Naive thymus-derived CD4-positive, alpha-beta T cell (primary cell): ENCODE measurements at regions of chr7 and their contacts with region 1.

Region 1: GRCh38 chr7:3461923-3462322 is 160.9 kb downstream of the SDK1 start:
- DNase-seq: peak; percentile 11 to 91 (median 86)
- ATAC-seq: peak; percentile 96
- H3K4me3 ChIP-seq: peak overlapping the region; percentile 19
- H3K4me3 Mint-ChIP-seq: peak overlapping the region; percentile 21 to 92 (median 81)
- H3K27ac ChIP-seq: peak overlapping the region; percentile 70
- H3K27ac Mint-ChIP-seq: peak overlapping the region; percentile 76 to 96 (median 93)
- H3K4me1 ChIP-seq: peaks cover 15 to 45% of the 10 kb centered on the region in 2 donors
- H3K4me1 Mint-ChIP-seq: peaks cover 20 to 90% (median 77%) of the 10 kb centered on the region in 7 donors
- H3K27me3 ChIP-seq: no peaks in the 10 kb centered on the region
- H3K27me3 Mint-ChIP-seq: no peaks in the 10 kb centered on the region

Region 2: GRCh38 chr7:3399858-3400257 is 62.1 kb before region 1 on chr7:
- CTCF ChIA-PET with region 1: no interaction called
- POLR2A ChIA-PET with region 1: no interaction called
- intact Hi-C with region 1: loop called in 1 of 2 experiments (anchors 5 kb)
- DNase-seq: no peak
- ATAC-seq: peak; percentile 49
- H3K4me3 ChIP-seq: no peak overlapping the region
- H3K4me3 Mint-ChIP-seq: no peak overlapping the region
- H3K27ac ChIP-seq: no peak overlapping the region
- H3K27ac Mint-ChIP-seq: no peak overlapping the region
- H3K4me1 ChIP-seq: no peaks in the 10 kb centered on the region
- H3K4me1 Mint-ChIP-seq: peaks cover 0 to 3% (median 0%) of the 10 kb centered on the region in 7 donors
- H3K27me3 ChIP-seq: peaks cover 0 to 3% of the 10 kb centered on the region in 2 donors
- H3K27me3 Mint-ChIP-seq: peaks cover 0 to 15% (median 0%) of the 10 kb centered on the region in 5 donors

Region 3: GRCh38 chr7:3476598-3476997 is 14.7 kb after region 1 on chr7:
- CTCF ChIA-PET with region 1: no interaction called
- POLR2A ChIA-PET with region 1: no interaction called
- intact Hi-C with region 1: loop called in 1 of 2 experiments (anchors 1 kb)
- DNase-seq: no peak
- ATAC-seq: no peak
- H3K4me3 ChIP-seq: no peak overlapping the region
- H3K4me3 Mint-ChIP-seq: peak overlapping the region in 1 of 10 donors; percentile 46
- H3K27ac ChIP-seq: no peak overlapping the region
- H3K27ac Mint-ChIP-seq: peak overlapping the region in 1 of 9 donors; percentile 34
- H3K4me1 ChIP-seq: no peaks in the 10 kb centered on the region
- H3K4me1 Mint-ChIP-seq: peaks cover 0 to 31% (median 18%) of the 10 kb centered on the region in 7 donors
- H3K27me3 ChIP-seq: no peaks in the 10 kb centered on the region
- H3K27me3 Mint-ChIP-seq: peaks cover 0 to under 1% (median 0%) of the 10 kb centered on the region in 5 donors

Region 4: GRCh38 chr7:3482147-3482964 is 20.4 kb after region 1 on chr7:
- CTCF ChIA-PET with region 1: no interaction called
- POLR2A ChIA-PET with region 1: no interaction called
- intact Hi-C with region 1: loop called in 1 of 2 experiments (anchors 1 kb)
- DNase-seq: no peak
- ATAC-seq: no peak
- H3K4me3 ChIP-seq: no peak overlapping the region
- H3K4me3 Mint-ChIP-seq: no peak overlapping the region
- H3K27ac ChIP-seq: no peak overlapping the region
- H3K27ac Mint-ChIP-seq: peak overlapping the region in 1 of 9 donors; percentile 83
- H3K4me1 ChIP-seq: no peaks in the 10 kb centered on the region
- H3K4me1 Mint-ChIP-seq: peaks cover 0 to 11% (median 0%) of the 10 kb centered on the region in 7 donors
- H3K27me3 ChIP-seq: no peaks in the 10 kb centered on the region
- H3K27me3 Mint-ChIP-seq: peaks cover 0 to 14% (median 0%) of the 10 kb centered on the region in 5 donors

Region 5: DNA sequence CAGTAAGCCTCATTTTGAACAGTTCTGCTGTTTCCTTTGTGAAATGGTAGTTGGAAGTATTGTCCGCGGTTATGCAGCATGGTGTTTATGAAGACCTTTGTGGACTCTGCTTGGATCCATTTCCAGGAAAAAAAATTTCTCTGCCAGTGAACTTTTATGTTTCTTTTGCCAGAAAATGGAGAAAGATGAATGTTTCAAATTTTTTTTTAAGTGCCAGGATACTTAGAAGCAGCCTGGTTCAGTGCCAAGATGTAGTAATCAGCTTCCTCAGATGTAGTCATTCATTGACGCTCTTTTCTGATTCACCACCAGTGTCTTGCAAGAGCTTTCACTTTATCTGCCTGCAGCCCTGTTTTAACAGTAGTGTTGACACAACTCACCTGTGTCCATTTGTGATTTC is 97.4 kb after region 1 on chr7:
- CTCF ChIA-PET with region 1: no interaction called
- POLR2A ChIA-PET with region 1: no interaction called
- intact Hi-C with region 1: no loop called
- DNase-seq: peak in 3 of 9 donors; percentile 3 to 32 (median 22)
- ATAC-seq: no peak
- H3K4me3 ChIP-seq: no peak overlapping the region
- H3K4me3 Mint-ChIP-seq: peak overlapping the region in 4 of 10 donors; percentile 18 to 47 (median 35)
- H3K27ac ChIP-seq: no peak overlapping the region
- H3K27ac Mint-ChIP-seq: no peak overlapping the region
- H3K4me1 ChIP-seq: no peaks in the 10 kb centered on the region
- H3K4me1 Mint-ChIP-seq: peaks cover 0 to 25% (median 13%) of the 10 kb centered on the region in 7 donors
- H3K27me3 ChIP-seq: no peaks in the 10 kb centered on the region
- H3K27me3 Mint-ChIP-seq: peaks cover 0 to 3% (median 0%) of the 10 kb centered on the region in 5 donors

Region 6: DNA sequence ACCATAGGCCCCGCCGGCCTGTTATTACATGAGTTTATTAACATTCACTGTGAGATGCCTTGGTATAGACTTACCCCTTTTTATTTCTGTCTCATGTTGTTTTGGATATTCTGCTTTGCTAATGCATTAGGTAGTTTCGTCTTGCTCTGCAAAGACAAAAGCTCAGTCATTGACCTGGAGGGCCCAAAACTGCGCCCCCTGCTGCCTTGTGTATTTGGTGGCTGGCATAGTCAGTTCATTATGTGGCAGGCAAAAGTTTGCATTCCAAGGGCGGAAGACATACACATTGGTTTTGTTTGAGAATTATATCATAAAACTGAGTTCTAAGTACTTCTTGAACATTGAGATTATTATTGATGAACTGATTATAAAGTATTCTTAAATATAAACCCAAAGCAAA is 211.6 kb after region 1 on chr7:
- CTCF ChIA-PET with region 1: interaction called, 3 read pairs
- POLR2A ChIA-PET with region 1: no interaction called
- intact Hi-C with region 1: loop called in 1 of 2 experiments (anchors 2 kb)
- DNase-seq: peak; percentile 14 to 60 (median 46)
- ATAC-seq: peak; percentile 50
- H3K4me3 ChIP-seq: no peak overlapping the region
- H3K4me3 Mint-ChIP-seq: no peak overlapping the region
- H3K27ac ChIP-seq: no peak overlapping the region
- H3K27ac Mint-ChIP-seq: no peak overlapping the region
- H3K4me1 ChIP-seq: peaks cover 0 to 19% of the 10 kb centered on the region in 2 donors
- H3K4me1 Mint-ChIP-seq: peaks cover 0 to 12% (median 3%) of the 10 kb centered on the region in 7 donors
- H3K27me3 ChIP-seq: no peaks in the 10 kb centered on the region
- H3K27me3 Mint-ChIP-seq: no peaks in the 10 kb centered on the region

Region 7: GRCh38 chr7:3897438-3898385 is 435.8 kb after region 1 on chr7:
- CTCF ChIA-PET with region 1: no interaction called
- POLR2A ChIA-PET with region 1: no interaction called
- intact Hi-C with region 1: loop called in 1 of 2 experiments (anchors 1 kb)
- DNase-seq: peak in 7 of 9 donors; percentile 12 to 55 (median 45)
- ATAC-seq: peak; percentile 77
- H3K4me3 ChIP-seq: no peak overlapping the region
- H3K4me3 Mint-ChIP-seq: no peak overlapping the region
- H3K27ac ChIP-seq: no peak overlapping the region
- H3K27ac Mint-ChIP-seq: peak overlapping the region in 1 of 9 donors; percentile 12
- H3K4me1 ChIP-seq: no peaks in the 10 kb centered on the region
- H3K4me1 Mint-ChIP-seq: peaks cover 0 to 9% (median 0%) of the 10 kb centered on the region in 7 donors
- H3K27me3 ChIP-seq: no peaks in the 10 kb centered on the region
- H3K27me3 Mint-ChIP-seq: peaks cover 0 to 9% (median 0%) of the 10 kb centered on the region in 5 donors